ENCODE measurements at regions of chr11 and their contacts with region 1.

Region 1: GRCh38 chr11:62841361-62842184 is 2.2 kb upstream of the WDR74 start:
- DNase-seq: peak; percentile 97 to 99
- ATAC-seq: peak; percentile 87 to 91
- H3K4me3 ChIP-seq: peak overlapping the region; percentile 89
- H3K27ac ChIP-seq: peak overlapping the region; percentile 94 to 99
- H3K4me1 ChIP-seq: peaks cover 16% of the 10 kb centered on the region
- CTCF ChIP-seq: no peak
- EP300 ChIP-seq: peak in 1 of 2 experiments; percentile 49; a peak in 1 of 5 replicates
- POLR2A ChIP-seq: peak; percentile 95
- RAD21 ChIP-seq: no peak

Region 2: GRCh38 chr11:62771144-62772021 is 70.2 kb before region 1 on chr11 and contains the start of gene TAF6L:
- CTCF ChIA-PET with region 1: no interaction called
- POLR2A ChIA-PET with region 1: interaction called, 12 read pairs
- DNase-seq: peak; percentile 97 to 98
- ATAC-seq: peak; percentile 96 to 97
- H3K4me3 ChIP-seq: peak within 1 kb of the TSS; percentile 78
- H3K27ac ChIP-seq: peak within 1 kb of the TSS; percentile 93 to 94
- H3K4me1 ChIP-seq: peaks cover 15% of the 10 kb centered on the region
- CTCF ChIP-seq: no peak
- EP300 ChIP-seq: no peak
- POLR2A ChIP-seq: peak; percentile 55
- RAD21 ChIP-seq: no peak
- polyA plus RNA-seq, gene TAF6L: 14.0 and 17.5 TPM in 2 replicates

Region 3: GRCh38 chr11:62855571-62856332 is 14.2 kb after region 1 on chr11:
- CTCF ChIA-PET with region 1: interaction called, 6 read pairs
- POLR2A ChIA-PET with region 1: interaction called, 159 read pairs
- DNase-seq: peak; percentile 95 to 98
- ATAC-seq: peak; percentile 82 to 89
- H3K4me3 ChIP-seq: peak overlapping the region; percentile 80
- H3K27ac ChIP-seq: peak overlapping the region; percentile 90 to 96
- H3K4me1 ChIP-seq: peaks cover 51% of the 10 kb centered on the region
- CTCF ChIP-seq: no peak
- EP300 ChIP-seq: no peak
- POLR2A ChIP-seq: peak; percentile 95
- RAD21 ChIP-seq: no peak

Region 4: DNA sequence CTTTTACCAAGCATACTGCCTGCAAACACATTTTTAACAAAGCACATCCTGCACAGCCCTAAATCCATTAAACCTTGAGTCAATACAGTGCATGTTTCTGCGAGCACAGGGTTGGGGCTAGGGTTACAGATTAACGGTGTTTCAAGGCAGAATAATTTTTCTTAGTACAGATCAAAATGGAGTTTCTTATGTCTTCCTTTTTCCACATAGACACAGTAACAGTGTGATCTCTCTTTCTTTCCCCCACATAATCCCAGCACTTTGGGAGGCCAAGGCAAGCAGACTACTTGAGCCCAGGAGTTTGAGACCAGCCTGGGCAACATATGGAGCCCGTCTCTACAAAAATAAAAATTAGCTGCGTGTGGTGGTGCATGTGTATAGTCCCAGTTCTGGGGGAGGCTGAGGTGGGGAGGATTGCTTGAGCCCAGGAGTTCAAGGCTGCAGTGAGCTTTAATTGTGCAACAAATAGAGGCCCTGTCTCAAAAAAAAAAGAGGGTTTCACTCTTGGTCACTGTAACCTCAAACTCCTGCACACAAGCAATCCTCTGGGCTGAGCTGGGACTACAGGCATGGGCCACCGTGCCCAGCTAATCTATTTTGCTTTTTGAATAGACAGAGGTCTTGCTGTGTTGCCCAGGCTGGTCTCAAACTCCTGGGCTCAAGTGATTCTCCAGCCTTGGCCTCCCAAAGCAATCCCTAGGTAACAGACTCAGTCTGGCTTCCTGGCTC is 19.4 kb after region 1 on chr11:
- CTCF ChIA-PET with region 1: interaction called, 6 read pairs
- POLR2A ChIA-PET with region 1: interaction called, 159 read pairs
- DNase-seq: no peak
- ATAC-seq: no peak
- H3K4me3 ChIP-seq: no peak overlapping the region
- H3K27ac ChIP-seq: peak overlapping the region in 1 of 2 experiments; percentile 23; a peak in 3 of 6 replicates
- H3K4me1 ChIP-seq: peaks cover 33% of the 10 kb centered on the region
- CTCF ChIP-seq: no peak
- EP300 ChIP-seq: no peak
- POLR2A ChIP-seq: no peak
- RAD21 ChIP-seq: no peak

Region 5: GRCh38 chr11:62880803-62881578 is 39.4 kb after region 1 on chr11 and contains the start of gene SLC3A2:
- CTCF ChIA-PET with region 1: interaction called, 3 read pairs
- POLR2A ChIA-PET with region 1: interaction called, 48 read pairs
- DNase-seq: peak; percentile 86 to 88
- ATAC-seq: peak; percentile 85 to 94
- H3K4me3 ChIP-seq: peak within 1 kb of the TSS; percentile 89
- H3K27ac ChIP-seq: peak within 1 kb of the TSS; percentile 97 to 100
- H3K4me1 ChIP-seq: peaks cover 47% of the 10 kb centered on the region
- CTCF ChIP-seq: peak; percentile 74
- EP300 ChIP-seq: no peak
- POLR2A ChIP-seq: peak; percentile 99
- RAD21 ChIP-seq: peak; percentile 25 to 47; a peak in 4 of 5 replicates
- polyA plus RNA-seq, gene SLC3A2: 1,064 and 1,133 TPM in 2 replicates